OCI-LY7 (cell line): ENCODE measurements at regions of chr18 and their contacts with region 1.

Region 1: DNA sequence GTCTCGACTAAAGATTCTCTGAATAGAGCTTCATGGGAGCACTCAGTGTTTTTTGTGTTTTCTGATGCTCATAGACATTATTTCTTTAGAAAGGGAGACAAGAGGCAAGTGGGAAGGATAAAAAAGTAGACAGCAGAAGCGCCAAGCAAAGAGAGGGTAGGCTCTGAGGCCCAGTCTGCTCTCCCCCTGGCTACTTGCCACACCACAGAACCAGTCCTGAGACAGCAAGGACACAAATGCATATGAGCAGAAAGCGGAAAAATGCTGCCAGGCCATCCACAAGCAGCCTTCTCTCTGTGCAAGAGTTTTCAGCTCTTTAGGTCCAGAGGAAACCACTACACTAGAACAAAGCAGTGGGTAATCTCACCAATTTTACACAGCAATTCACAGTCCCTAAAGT is 285.4 kb downstream of the ZNF521 start:
- DNase-seq: no peak
- H3K4me3 ChIP-seq: no peak overlapping the region
- H3K27ac ChIP-seq: no peak overlapping the region
- H3K4me1 ChIP-seq: no peaks in the 10 kb centered on the region
- CTCF ChIP-seq: no peak

Region 2: DNA sequence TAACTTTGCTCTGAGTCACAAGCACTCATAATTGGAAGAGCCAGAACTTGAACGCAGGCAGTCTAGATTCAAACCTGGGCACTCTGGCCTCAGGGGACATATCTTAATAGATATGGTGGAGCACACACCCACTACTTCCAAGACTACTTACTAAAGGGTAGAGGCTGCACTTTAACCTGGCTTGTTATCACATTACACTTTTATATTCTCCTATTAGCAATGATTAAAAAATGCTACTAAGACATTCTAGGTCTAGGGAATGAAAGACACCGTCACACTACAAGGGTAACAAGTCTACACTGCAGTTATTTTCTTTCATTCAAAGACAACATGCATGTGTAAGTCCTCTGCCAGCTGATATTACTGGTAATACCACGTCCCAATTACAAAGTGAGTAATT is 26.6 kb after region 1 on chr18:
- CTCF ChIA-PET with region 1: no interaction called
- POLR2A ChIA-PET with region 1: no interaction called
- intact Hi-C with region 1: loop called (anchors 1 kb)
- DNase-seq: no peak
- H3K4me3 ChIP-seq: no peak overlapping the region
- H3K27ac ChIP-seq: no peak overlapping the region
- H3K4me1 ChIP-seq: peaks cover 11% of the 10 kb centered on the region
- CTCF ChIP-seq: no peak

Region 3: GRCh38 chr18:25111377-25112288 is 45.1 kb after region 1 on chr18:
- CTCF ChIA-PET with region 1: no interaction called
- POLR2A ChIA-PET with region 1: no interaction called
- intact Hi-C with region 1: loop called (anchors 5 kb)
- DNase-seq: no peak
- H3K4me3 ChIP-seq: no peak overlapping the region
- H3K27ac ChIP-seq: no peak overlapping the region
- H3K4me1 ChIP-seq: no peaks in the 10 kb centered on the region
- CTCF ChIP-seq: no peak

Region 4: GRCh38 chr18:25661831-25662230 is 595.3 kb after region 1 on chr18:
- CTCF ChIA-PET with region 1: no interaction called
- POLR2A ChIA-PET with region 1: no interaction called
- intact Hi-C with region 1: no loop called
- DNase-seq: no peak
- H3K4me3 ChIP-seq: no peak overlapping the region
- H3K27ac ChIP-seq: no peak overlapping the region
- H3K4me1 ChIP-seq: no peaks in the 10 kb centered on the region
- CTCF ChIP-seq: no peak